ENCODE measurements at regions of chr17 and their contacts with region 1.

Region 1: GRCh38 chr17:34413443-34414119 is 50.5 kb upstream of the CCL1 start:
- DNase-seq: peak; percentile 23 to 40 (median 29)
- ATAC-seq: peak; percentile 46
- H3K4me3 ChIP-seq: no peak overlapping the region
- H3K27ac ChIP-seq: peak overlapping the region; percentile 84
- H3K4me1 ChIP-seq: peaks cover 13 to 36% of the 10 kb centered on the region in 2 experiments
- H3K27me3 ChIP-seq: no peaks in the 10 kb centered on the region; a peak in 1 of 5 replicates
- CTCF ChIP-seq: no peak
- EP300 ChIP-seq: no peak
- POLR2A ChIP-seq: no peak
- RAD21 ChIP-seq: no peak

Region 2: GRCh38 chr17:34398990-34399389 is 14.6 kb before region 1 on chr17:
- CTCF ChIA-PET with region 1: no interaction called
- POLR2A ChIA-PET with region 1: interaction called, 11 read pairs
- in situ Hi-C with region 1: no loop called
- intact Hi-C with region 1: no loop called
- DNase-seq: no peak
- ATAC-seq: no peak; the same call in 2 of the 3 replicates
- H3K4me3 ChIP-seq: no peak overlapping the region
- H3K27ac ChIP-seq: no peak overlapping the region
- H3K4me1 ChIP-seq: peaks cover 0 to 9% of the 10 kb centered on the region in 2 experiments; a peak in 3 of 5 replicates
- H3K27me3 ChIP-seq: no peaks in the 10 kb centered on the region; a peak in 1 of 5 replicates
- CTCF ChIP-seq: no peak
- EP300 ChIP-seq: no peak
- POLR2A ChIP-seq: no peak
- RAD21 ChIP-seq: no peak

Region 3: DNA sequence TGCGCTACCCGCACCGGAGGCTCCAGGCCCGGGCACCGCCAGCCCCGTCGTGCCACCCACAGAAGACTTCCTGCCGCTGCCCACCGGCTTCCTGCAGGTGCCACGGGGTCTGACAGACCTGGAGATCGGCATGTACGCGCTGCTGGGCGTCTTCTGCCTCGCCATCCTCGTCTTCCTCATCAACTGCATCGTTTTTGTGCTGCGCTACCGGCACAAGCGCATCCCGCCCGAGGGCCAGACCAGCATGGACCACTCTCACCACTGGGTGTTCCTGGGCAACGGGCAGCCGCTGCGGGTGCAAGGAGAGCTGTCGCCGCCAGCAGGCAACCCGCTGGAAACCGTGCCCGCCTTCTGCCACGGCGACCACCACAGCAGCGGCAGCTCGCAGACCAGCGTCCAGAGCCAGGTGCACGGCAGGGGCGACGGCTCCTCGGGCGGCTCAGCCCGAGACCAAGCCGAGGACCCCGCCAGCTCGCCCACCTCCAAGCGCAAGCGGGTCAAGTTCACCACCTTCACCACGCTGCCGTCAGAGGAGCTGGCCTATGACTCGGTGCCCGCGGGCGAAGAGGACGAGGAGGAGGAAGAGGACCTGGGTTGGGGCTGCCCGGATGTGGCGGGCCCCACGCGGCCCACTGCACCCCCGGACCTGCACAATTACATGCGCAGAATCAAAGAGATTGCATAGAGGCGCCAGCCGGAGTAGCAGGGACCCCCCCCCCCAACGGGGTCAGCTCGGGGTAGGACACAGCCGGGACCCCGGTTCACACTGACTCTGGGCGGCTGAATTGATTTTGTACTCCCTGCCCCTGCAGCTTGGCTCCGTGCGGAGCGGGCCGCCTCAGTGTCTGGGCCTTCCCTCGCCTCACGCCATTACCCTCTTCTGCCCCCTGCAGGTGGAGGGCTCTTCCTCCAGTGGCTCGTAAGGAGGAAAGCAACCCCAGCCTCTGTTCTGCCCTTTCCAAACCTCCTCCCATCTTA is 224.3 kb after region 1 on chr17:
- CTCF ChIA-PET with region 1: no interaction called
- POLR2A ChIA-PET with region 1: no interaction called
- in situ Hi-C with region 1: no loop called
- intact Hi-C with region 1: loop called (anchors 10 kb)
- DNase-seq: peak; percentile 82 to 86 (median 83)
- ATAC-seq: peak; percentile 99
- H3K4me3 ChIP-seq: no peak overlapping the region
- H3K27ac ChIP-seq: no peak overlapping the region
- H3K4me1 ChIP-seq: peaks cover 0 to 13% of the 10 kb centered on the region in 2 experiments; a peak in 1 of 5 replicates
- H3K27me3 ChIP-seq: peaks cover 6 to 65% of the 10 kb centered on the region in 2 experiments; a peak in 4 of 5 replicates
- CTCF ChIP-seq: peak; percentile 83 to 89 (median 85)
- EP300 ChIP-seq: no peak
- POLR2A ChIP-seq: no peak
- RAD21 ChIP-seq: peak; percentile 46 to 75

Measured in K562 (cell line).